Caco-2 (cell line): ENCODE measurements at regions of chr1 and their contacts with region 1.

Region 1: DNA sequence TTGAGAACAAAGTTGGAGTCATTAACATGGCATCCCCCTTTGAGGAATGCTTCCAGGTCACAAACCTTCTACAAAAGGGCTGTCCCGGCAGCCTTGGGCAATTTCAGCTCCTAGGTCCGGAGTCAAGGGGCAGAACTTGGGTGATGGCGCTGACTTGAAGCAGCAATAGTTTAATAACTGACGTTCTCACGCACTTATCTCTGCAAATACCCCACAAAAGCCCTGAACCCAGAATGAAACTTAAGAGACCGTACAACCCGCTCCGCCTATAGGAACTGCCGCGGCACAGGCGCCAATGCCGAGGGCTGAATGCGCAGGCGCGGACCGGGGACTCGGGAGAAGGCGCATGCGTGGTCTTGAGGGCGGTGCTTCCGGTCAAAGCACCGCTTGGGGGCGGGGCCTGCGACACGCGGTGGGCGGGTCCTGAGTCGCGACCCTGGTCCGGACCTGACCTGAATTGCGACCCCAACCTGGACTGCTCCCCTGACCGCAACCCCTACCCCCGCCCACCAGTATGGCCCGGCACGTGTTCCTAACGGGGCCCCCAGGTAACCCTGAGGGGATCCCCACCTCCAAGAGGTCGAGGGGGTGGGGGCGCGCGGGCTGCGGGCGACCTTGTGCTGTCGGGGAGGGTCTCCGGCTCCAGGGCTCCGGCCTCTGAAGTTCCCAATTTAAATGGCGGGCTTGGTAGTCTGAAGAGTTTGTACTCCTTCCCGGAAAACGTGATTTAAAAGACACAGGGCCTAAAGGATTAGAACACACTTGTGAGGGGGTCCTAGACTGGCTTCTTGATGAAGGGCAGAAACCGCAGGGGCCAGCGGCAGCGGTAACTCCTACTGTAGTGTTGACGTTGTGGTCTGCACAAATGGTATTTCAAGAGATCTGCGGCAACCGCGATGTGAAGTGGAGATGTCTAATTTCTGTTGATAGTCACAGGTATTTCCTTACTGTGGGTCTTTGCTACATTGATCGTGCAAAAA is at the start of gene NTPCR:
- DNase-seq: peak; percentile 93 to 97
- H3K4me3 ChIP-seq: peak within 1 kb of the TSS; percentile 97
- H3K4me3 Mint-ChIP-seq: peak within 1 kb of the TSS; percentile 95
- H3K27ac Mint-ChIP-seq: peak within 1 kb of the TSS; percentile 91
- H3K4me1 ChIP-seq: peaks cover 8% of the 10 kb centered on the region; the same call in 1 of the 2 replicates
- H3K4me1 Mint-ChIP-seq: peaks cover 20% of the 10 kb centered on the region
- H3K27me3 ChIP-seq: no peaks in the 10 kb centered on the region
- H3K27me3 Mint-ChIP-seq: no peaks in the 10 kb centered on the region
- CTCF ChIP-seq: no peak
- total RNA-seq, gene NTPCR: 46.5 and 49.1 TPM in 2 replicates

Region 2: GRCh38 chr1:232635778-232636356 is 314.6 kb before region 1 on chr1:
- CTCF ChIA-PET with region 1: no interaction called
- POLR2A ChIA-PET with region 1: no interaction called
- intact Hi-C with region 1: loop called (anchors 1 kb)
- DNase-seq: peak in 1 of 2 experiments; percentile 23
- H3K4me3 ChIP-seq: no peak overlapping the region
- H3K4me3 Mint-ChIP-seq: no peak overlapping the region
- H3K27ac Mint-ChIP-seq: no peak overlapping the region
- H3K4me1 ChIP-seq: peaks cover 5% of the 10 kb centered on the region; the same call in 1 of the 2 replicates
- H3K4me1 Mint-ChIP-seq: no peaks in the 10 kb centered on the region
- H3K27me3 ChIP-seq: no peaks in the 10 kb centered on the region; the same call in 1 of the 2 replicates
- H3K27me3 Mint-ChIP-seq: no peaks in the 10 kb centered on the region
- CTCF ChIP-seq: peak; percentile 63 to 65

Region 3: GRCh38 chr1:232830661-232831060 is 119.8 kb before region 1 on chr1:
- CTCF ChIA-PET with region 1: no interaction called
- POLR2A ChIA-PET with region 1: interaction called, 3 read pairs
- intact Hi-C with region 1: loop called (anchors 2 kb)
- DNase-seq: peak; percentile 79 to 83
- H3K4me3 ChIP-seq: no peak overlapping the region
- H3K4me3 Mint-ChIP-seq: peak overlapping the region; percentile 15
- H3K27ac Mint-ChIP-seq: peak overlapping the region; percentile 67
- H3K4me1 ChIP-seq: peaks cover 18% of the 10 kb centered on the region
- H3K4me1 Mint-ChIP-seq: peaks cover 11% of the 10 kb centered on the region
- H3K27me3 ChIP-seq: no peaks in the 10 kb centered on the region
- H3K27me3 Mint-ChIP-seq: no peaks in the 10 kb centered on the region
- CTCF ChIP-seq: no peak

Region 4: DNA sequence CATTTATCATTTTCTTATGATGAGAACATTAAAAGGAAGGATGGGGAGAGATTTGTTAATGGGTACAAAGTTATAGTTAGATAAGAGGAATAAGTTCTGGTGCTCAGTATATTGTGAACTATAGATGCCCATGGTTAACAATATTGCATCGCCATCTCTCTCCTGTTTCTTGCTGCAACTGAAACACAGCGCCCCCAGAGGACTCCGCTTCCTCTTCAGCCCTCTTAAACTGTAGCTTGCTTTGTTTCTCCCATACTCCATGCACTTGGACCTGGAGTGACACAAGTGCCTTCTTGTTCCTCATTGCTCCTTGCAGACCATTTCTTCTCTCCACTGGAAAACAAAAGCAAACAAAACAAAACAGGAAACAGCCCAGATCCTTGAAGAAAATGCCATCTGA is 70.1 kb before region 1 on chr1:
- CTCF ChIA-PET with region 1: no interaction called
- POLR2A ChIA-PET with region 1: no interaction called
- intact Hi-C with region 1: loop called (anchors 5 kb)
- DNase-seq: peak in 1 of 2 experiments; percentile 46
- H3K4me3 ChIP-seq: no peak overlapping the region
- H3K4me3 Mint-ChIP-seq: no peak overlapping the region
- H3K27ac Mint-ChIP-seq: no peak overlapping the region
- H3K4me1 ChIP-seq: no peaks in the 10 kb centered on the region
- H3K4me1 Mint-ChIP-seq: no peaks in the 10 kb centered on the region
- H3K27me3 ChIP-seq: no peaks in the 10 kb centered on the region
- H3K27me3 Mint-ChIP-seq: no peaks in the 10 kb centered on the region
- CTCF ChIP-seq: peak; percentile 39 to 55

Region 5: GRCh38 chr1:232902774-232903350 is 47.6 kb before region 1 on chr1:
- CTCF ChIA-PET with region 1: no interaction called
- POLR2A ChIA-PET with region 1: no interaction called
- intact Hi-C with region 1: loop called (anchors 2 kb)
- DNase-seq: peak; percentile 26 to 43
- H3K4me3 ChIP-seq: no peak overlapping the region
- H3K4me3 Mint-ChIP-seq: peak overlapping the region; percentile 54
- H3K27ac Mint-ChIP-seq: no peak overlapping the region
- H3K4me1 ChIP-seq: peaks cover 52% of the 10 kb centered on the region
- H3K4me1 Mint-ChIP-seq: peaks cover 40% of the 10 kb centered on the region
- H3K27me3 ChIP-seq: no peaks in the 10 kb centered on the region
- H3K27me3 Mint-ChIP-seq: no peaks in the 10 kb centered on the region
- CTCF ChIP-seq: no peak

Region 6: GRCh38 chr1:232996143-232996542 is 45.7 kb after region 1 on chr1:
- CTCF ChIA-PET with region 1: no interaction called
- POLR2A ChIA-PET with region 1: no interaction called
- intact Hi-C with region 1: loop called (anchors 2 kb)
- DNase-seq: peak; percentile 56 to 66
- H3K4me3 ChIP-seq: no peak overlapping the region
- H3K4me3 Mint-ChIP-seq: peak overlapping the region; percentile 9
- H3K27ac Mint-ChIP-seq: peak overlapping the region; percentile 25
- H3K4me1 ChIP-seq: peaks cover 16% of the 10 kb centered on the region
- H3K4me1 Mint-ChIP-seq: peaks cover 14% of the 10 kb centered on the region
- H3K27me3 ChIP-seq: no peaks in the 10 kb centered on the region
- H3K27me3 Mint-ChIP-seq: no peaks in the 10 kb centered on the region
- CTCF ChIP-seq: no peak

Region 7: DNA sequence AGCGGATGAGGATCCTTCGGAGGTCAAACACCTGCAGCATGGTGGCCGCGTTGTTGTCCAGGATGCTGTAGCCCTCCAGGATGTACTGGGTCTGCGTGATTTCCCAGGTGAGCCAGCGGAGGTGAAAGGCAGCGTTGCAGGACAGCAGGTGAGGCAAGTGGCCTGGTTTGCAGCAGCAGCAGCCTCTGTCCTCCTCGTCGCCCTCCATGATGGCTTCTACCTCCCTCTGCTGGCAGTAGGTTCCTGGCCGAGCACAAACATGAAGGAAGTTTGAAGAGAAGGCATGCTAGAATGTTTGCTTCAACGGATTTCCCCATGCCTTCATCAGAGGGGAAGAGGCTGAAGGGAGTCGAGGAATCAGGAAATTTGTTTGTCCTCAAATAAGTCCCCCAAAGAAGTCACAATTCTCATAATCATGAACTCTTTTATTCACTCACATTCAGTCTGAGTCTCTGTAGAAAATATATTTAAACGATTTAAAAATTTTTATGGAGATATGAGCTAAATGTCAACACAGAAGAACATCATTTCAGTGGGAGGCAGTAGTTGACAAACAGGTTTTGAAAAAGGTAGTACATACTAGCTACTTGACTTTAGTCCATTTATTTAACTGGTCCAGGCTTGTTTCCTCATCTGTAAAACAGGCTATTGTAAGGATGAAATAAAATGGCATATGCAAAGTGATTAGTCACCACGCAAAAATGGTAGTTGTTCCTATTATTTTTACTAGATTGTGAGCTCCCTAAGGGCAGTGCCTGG is 74.8 kb after region 1 on chr1:
- CTCF ChIA-PET with region 1: no interaction called
- POLR2A ChIA-PET with region 1: no interaction called
- intact Hi-C with region 1: loop called (anchors 2 kb)
- DNase-seq: peak; percentile 82 to 83
- H3K4me3 ChIP-seq: no peak overlapping the region
- H3K4me3 Mint-ChIP-seq: no peak overlapping the region
- H3K27ac Mint-ChIP-seq: no peak overlapping the region
- H3K4me1 ChIP-seq: peaks cover 6% of the 10 kb centered on the region; the same call in 1 of the 2 replicates
- H3K4me1 Mint-ChIP-seq: peaks cover 23% of the 10 kb centered on the region
- H3K27me3 ChIP-seq: no peaks in the 10 kb centered on the region
- H3K27me3 Mint-ChIP-seq: peaks cover 7% of the 10 kb centered on the region
- CTCF ChIP-seq: peak; percentile 74 to 94